Naive thymus-derived CD8-positive, alpha-beta T cell (primary cell): ENCODE measurements at regions of chr19 and their contacts with region 1.

Region 1: DNA sequence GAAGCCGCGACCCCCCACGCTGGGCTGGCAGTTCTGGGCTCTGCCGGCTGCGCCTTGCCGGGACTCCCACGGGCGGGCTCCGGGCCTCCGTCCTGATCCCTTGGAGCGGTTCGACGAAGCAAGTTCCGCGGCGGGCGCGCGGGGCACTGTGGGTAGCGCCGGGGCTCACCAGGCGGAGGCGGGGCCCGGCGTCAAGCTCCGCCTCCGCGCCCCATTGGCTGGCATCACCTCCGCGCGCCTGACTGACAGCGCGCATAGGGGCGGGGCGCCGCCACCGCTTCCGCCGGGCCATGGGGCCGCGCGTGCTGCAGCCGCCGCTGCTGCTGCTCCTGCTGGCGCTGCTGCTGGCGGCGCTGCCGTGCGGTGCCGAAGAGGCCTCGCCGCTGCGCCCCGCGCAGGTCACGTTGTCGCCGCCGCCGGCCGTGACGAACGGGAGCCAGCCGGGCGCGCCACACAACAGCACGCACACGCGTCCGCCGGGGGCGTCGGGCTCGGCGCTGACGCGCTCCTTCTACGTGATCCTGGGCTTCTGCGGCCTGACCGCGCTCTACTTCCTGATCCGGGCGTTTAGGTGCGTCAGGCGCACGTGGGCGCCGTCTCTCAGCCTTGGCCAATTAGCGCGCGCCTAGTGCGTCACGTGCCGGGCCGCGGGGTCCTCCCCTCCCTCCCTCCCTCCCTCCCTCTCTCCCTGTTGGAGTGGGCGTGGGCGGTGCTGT is at the start of gene FAM174C:
- DNase-seq: peak; percentile 93 to 98 (median 96)
- ATAC-seq: peak; percentile 81 to 84
- H3K4me3 Mint-ChIP-seq: peak within 1 kb of the TSS; percentile 76 to 92 (median 87)
- H3K27ac Mint-ChIP-seq: peak within 1 kb of the TSS; percentile 85 to 98 (median 96)
- H3K4me1 Mint-ChIP-seq: peaks cover 29 to 62% (median 58%) of the 10 kb centered on the region in 4 donors
- H3K27me3 Mint-ChIP-seq: no peaks in the 10 kb centered on the region
- polyA plus RNA-seq, gene FAM174C: 66.7 to 104 (median 95.5) TPM

Region 2: GRCh38 chr19:1154731-1155351 is 120.6 kb before region 1 on chr19:
- POLR2A ChIA-PET with region 1: no interaction called
- DNase-seq: no peak
- ATAC-seq: no peak
- H3K4me3 Mint-ChIP-seq: no peak overlapping the region
- H3K27ac Mint-ChIP-seq: no peak overlapping the region
- H3K4me1 Mint-ChIP-seq: peaks cover 0 to 8% (median 0%) of the 10 kb centered on the region in 4 donors
- H3K27me3 Mint-ChIP-seq: no peaks in the 10 kb centered on the region

Region 3: GRCh38 chr19:1241417-1242095 is 33.9 kb before region 1 on chr19 and contains the start of gene ATP5F1D:
- POLR2A ChIA-PET with region 1: interaction called, 43 read pairs
- DNase-seq: peak; percentile 79 to 93 (median 86)
- ATAC-seq: peak; percentile 64 to 66
- H3K4me3 Mint-ChIP-seq: peak within 1 kb of the TSS; percentile 79 to 96 (median 88)
- H3K27ac Mint-ChIP-seq: peak within 1 kb of the TSS; percentile 86 to 98 (median 94)
- H3K4me1 Mint-ChIP-seq: peaks cover 13 to 48% (median 44%) of the 10 kb centered on the region in 4 donors
- H3K27me3 Mint-ChIP-seq: peaks cover 2 to 9% (median 7%) of the 10 kb centered on the region in 5 donors
- polyA plus RNA-seq, gene ATP5F1D: 214 to 264 (median 262) TPM

Region 4: GRCh38 chr19:1252821-1253513 is 22.5 kb before region 1 on chr19:
- POLR2A ChIA-PET with region 1: interaction called, 12 read pairs
- DNase-seq: peak; percentile 73 to 91 (median 80)
- ATAC-seq: peak; percentile 7 to 31
- H3K4me3 Mint-ChIP-seq: peak overlapping the region; percentile 33 to 95 (median 73)
- H3K27ac Mint-ChIP-seq: peak overlapping the region; percentile 28 to 97 (median 84)
- H3K4me1 Mint-ChIP-seq: peaks cover 15 to 40% (median 29%) of the 10 kb centered on the region in 4 donors
- H3K27me3 Mint-ChIP-seq: peaks cover 0 to 3% (median 0%) of the 10 kb centered on the region in 5 donors

Region 5: GRCh38 chr19:1355568-1356507 is 80.4 kb after region 1 on chr19:
- POLR2A ChIA-PET with region 1: interaction called, 11 read pairs
- DNase-seq: no peak
- ATAC-seq: no peak
- H3K4me3 Mint-ChIP-seq: peak overlapping the region; percentile 72 to 96 (median 87)
- H3K27ac Mint-ChIP-seq: peak overlapping the region; percentile 12 to 90 (median 78)
- H3K4me1 Mint-ChIP-seq: peaks cover 11 to 25% (median 16%) of the 10 kb centered on the region in 4 donors
- H3K27me3 Mint-ChIP-seq: no peaks in the 10 kb centered on the region

Region 6: DNA sequence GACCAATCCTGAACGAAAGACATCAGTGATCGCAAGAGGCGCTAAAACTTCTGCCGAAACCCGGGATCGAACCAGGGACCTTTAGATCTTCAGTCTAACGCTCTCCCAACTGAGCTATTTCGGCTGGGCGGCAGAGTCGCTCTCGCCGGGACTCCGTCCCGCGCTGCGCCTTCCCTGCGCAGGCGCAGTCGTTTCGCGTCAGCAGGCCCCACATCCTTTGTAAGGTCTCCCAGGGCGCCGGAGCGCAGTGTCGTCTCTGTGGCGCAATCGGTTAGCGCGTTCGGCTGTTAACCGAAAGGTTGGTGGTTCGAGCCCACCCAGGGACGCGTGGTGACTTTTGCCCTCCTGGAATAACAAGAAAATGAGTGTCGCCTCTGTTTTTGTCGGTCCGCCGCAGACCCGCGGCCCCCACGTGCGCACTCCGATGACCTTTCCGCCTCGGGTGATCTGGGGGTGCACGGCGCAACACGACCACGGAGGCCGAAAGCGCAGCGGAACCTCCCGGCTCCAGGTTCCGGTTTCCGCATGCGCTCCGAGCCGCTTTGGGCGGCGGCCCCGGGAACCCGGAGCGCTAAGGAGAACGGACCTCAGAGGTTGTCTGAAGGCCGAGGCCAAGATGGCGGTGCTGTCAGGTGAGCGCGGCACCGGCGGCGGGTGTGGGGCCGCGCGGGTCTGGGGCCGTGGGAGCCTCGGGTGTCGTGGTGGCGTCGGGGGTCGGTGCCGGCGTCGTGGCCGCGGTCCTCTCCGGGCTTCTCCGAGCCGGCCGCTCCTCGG is 108.1 kb after region 1 on chr19 and contains the start of gene NDUFS7:
- POLR2A ChIA-PET with region 1: interaction called, 14 read pairs
- DNase-seq: peak; percentile 87 to 100 (median 94)
- ATAC-seq: peak; percentile 87 to 89
- H3K4me3 Mint-ChIP-seq: peak within 1 kb of the TSS; percentile 85 to 98 (median 94)
- H3K27ac Mint-ChIP-seq: peak within 1 kb of the TSS; percentile 94 to 100 (median 97)
- H3K4me1 Mint-ChIP-seq: peaks cover 19 to 32% (median 26%) of the 10 kb centered on the region in 4 donors
- H3K27me3 Mint-ChIP-seq: peaks cover 0 to 5% (median 2%) of the 10 kb centered on the region in 5 donors
- polyA plus RNA-seq, gene NDUFS7: 211 to 233 (median 215) TPM